Calu3 (cell line): ENCODE measurements at regions of chrX and their contacts with region 1.

Region 1: DNA sequence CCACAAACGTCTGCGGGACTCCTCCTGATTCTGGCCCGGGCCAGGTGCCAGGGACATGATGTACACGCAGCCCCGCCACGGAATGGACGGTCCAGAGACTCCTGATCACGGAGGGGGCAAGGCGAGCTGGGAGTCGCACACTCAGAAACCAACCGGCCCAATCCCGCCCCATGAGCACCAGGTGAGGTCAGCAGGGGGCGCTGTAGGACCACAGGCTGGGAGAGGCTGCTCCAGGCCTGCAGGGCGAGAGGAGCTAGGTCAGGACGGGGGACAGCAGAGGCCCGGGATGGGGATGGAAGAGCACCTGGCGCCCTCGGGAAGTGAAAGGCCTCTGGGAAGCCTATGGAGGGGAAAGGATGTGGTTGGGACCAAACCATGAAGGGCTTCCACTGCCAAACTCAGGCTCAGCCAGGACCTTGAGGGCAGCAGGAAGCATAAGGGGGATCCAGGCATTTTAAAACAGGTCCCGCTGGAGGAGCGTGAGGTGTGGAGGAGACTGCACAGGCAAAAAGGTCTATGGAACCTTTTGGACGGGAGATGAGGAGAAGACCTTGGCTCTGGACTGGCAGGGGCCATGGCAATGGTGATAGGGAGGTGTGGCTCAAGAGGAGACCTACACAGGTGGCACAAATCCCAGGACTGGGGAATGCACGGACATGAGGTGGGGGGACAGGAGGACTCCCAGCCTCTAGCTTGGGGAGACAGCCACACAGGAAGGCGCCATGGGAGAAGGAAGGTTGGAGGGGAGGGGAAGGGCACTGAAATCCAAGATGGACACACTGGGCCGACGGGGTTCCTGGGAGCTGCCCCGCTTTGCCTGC is 79.2 kb downstream of the MTMR1 start:
- DNase-seq: peak; percentile 85
- H3K4me3 Mint-ChIP-seq: no peak overlapping the region
- H3K27ac Mint-ChIP-seq: no peak overlapping the region
- H3K4me1 Mint-ChIP-seq: no peaks in the 10 kb centered on the region
- H3K27me3 Mint-ChIP-seq: no peaks in the 10 kb centered on the region
- CTCF ChIP-seq: peak; percentile 89

Region 2: DNA sequence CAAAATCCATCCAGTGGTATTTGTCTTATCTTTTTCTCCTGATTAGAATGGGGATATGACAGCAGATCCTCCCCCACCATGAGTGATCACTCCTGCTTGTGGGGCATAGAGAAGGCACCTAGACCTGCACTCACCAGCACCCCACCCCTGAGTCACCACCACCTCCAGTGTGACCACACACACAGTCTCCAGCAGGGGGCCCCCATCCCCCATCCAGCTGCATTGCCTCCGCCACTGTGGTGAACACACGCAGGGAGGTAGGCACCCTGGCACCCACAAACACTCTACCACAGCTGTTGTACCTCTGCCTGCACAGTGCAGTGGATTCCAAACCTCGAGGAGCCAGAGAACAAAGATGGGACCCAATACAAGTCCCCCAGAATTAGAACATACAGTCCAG is 900.4 kb before region 1 on chrX:
- CTCF ChIA-PET with region 1: no interaction called
- intact Hi-C with region 1: no loop called
- DNase-seq: peak; percentile 69
- H3K4me3 Mint-ChIP-seq: no peak overlapping the region
- H3K27ac Mint-ChIP-seq: no peak overlapping the region
- H3K4me1 Mint-ChIP-seq: peaks cover 7% of the 10 kb centered on the region
- H3K27me3 Mint-ChIP-seq: no peaks in the 10 kb centered on the region
- CTCF ChIP-seq: peak; percentile 56

Region 3: DNA sequence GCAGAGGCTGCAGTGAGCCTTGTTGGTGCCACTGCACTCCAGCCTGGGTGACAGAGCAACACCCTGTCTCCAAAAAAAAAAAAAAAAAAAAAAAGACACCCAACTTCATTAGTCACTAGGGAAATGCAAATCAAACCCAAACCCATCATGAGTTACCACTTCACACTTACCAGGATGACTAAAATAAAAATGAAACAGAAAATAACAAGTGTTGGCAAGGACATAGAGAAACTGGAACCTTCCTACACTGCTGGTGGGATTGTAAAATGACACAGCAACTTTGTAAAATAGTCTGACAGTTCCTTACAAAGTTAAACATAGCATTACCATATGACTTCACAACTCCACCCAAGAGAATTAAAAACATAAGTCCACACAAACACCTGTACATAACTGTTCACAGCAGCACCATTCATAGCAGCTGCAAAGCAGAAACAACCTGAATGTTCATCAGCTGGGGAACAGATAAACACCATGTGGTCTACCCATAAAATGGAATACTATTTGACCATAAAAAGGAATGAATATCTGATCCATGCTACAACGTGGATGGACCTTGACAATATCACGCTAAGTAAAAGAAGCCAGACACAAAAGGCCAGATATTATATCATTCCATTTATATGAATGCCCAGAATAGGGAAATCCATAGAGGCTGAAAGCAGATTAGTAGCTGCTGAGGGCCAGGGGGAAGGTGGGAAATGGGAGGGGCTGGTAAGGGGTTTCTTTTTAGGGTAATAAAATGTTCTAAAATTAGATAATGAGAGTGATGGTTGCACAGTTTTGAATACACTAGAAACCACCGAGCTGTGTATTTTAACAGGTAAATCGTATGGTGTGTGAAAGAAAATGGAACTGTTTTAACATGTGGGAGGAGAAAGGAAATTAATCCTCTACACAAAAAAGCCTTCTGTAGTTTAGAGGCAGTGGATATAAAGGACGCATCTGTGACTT is 107.8 kb after region 1 on chrX:
- CTCF ChIA-PET with region 1: no interaction called
- intact Hi-C with region 1: no loop called
- DNase-seq: no peak
- H3K4me3 Mint-ChIP-seq: no peak overlapping the region
- H3K27ac Mint-ChIP-seq: no peak overlapping the region
- H3K4me1 Mint-ChIP-seq: no peaks in the 10 kb centered on the region
- H3K27me3 Mint-ChIP-seq: no peaks in the 10 kb centered on the region
- CTCF ChIP-seq: no peak

Region 4: GRCh38 chrX:150982788-150983520 is 210.6 kb after region 1 on chrX and contains the start of gene HMGB3:
- CTCF ChIA-PET with region 1: interaction called, 4 read pairs
- intact Hi-C with region 1: loop called (anchors 10 kb)
- DNase-seq: peak; percentile 90
- H3K4me3 Mint-ChIP-seq: peak within 1 kb of the TSS; percentile 73
- H3K27ac Mint-ChIP-seq: no peak within 1 kb of the TSS
- H3K4me1 Mint-ChIP-seq: peaks cover 11% of the 10 kb centered on the region
- H3K27me3 Mint-ChIP-seq: no peaks in the 10 kb centered on the region
- CTCF ChIP-seq: no peak
- total RNA-seq, gene HMGB3: 99.4 and 143 TPM in 2 replicates

Region 5: GRCh38 chrX:151082076-151082948 is 310.0 kb after region 1 on chrX:
- CTCF ChIA-PET with region 1: interaction called, 29 read pairs
- intact Hi-C with region 1: loop called (anchors 1 kb)
- DNase-seq: peak; percentile 63
- H3K4me3 Mint-ChIP-seq: peak overlapping the region; percentile 31
- H3K27ac Mint-ChIP-seq: no peak overlapping the region
- H3K4me1 Mint-ChIP-seq: no peaks in the 10 kb centered on the region
- H3K27me3 Mint-ChIP-seq: peaks cover 39% of the 10 kb centered on the region
- CTCF ChIP-seq: peak; percentile 74